ENCODE measurements at regions of chr5 and their contacts with region 1.

Region 1: DNA sequence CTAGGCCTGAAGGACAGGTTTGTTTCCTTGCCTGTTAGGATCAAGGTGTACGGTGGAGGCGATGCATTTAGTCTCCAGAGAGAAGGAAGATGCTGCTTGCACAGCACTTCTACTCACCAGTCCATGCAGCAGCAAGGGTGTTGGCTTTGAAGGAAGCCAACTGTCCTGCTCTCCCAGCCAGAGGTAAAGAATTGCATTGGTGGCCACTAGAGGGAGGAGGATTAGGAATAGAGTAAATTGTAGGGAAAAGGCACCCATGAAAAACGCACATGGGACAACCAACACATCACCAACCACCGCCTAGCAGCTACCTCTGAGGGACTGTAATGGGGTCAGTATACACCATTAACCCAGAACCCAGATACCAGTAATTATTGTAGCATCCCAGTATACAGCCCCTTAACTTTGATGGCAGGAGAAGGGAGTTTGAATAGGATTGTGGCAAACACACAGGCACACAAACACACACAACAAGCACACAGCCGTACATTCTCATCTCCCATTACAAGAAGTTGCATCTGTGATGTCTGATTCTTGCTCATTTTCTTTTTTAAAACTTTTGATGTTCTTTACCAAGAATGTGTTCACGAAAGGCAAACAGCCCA is 267.7 kb downstream of the ADAMTS6 start:
- DNase-seq: peak; percentile 50
- H3K4me3 Mint-ChIP-seq: no peak overlapping the region
- H3K27ac Mint-ChIP-seq: no peak overlapping the region
- H3K4me1 Mint-ChIP-seq: no peaks in the 10 kb centered on the region
- H3K27me3 Mint-ChIP-seq: no peaks in the 10 kb centered on the region
- CTCF ChIP-seq: peak; percentile 70

Region 2: GRCh38 chr5:64746446-64746845 is 467.6 kb before region 1 on chr5:
- CTCF ChIA-PET with region 1: no interaction called
- intact Hi-C with region 1: no loop called
- DNase-seq: no peak
- H3K4me3 Mint-ChIP-seq: no peak overlapping the region
- H3K27ac Mint-ChIP-seq: no peak overlapping the region
- H3K4me1 Mint-ChIP-seq: no peaks in the 10 kb centered on the region
- H3K27me3 Mint-ChIP-seq: no peaks in the 10 kb centered on the region
- CTCF ChIP-seq: no peak

Region 3: GRCh38 chr5:65086234-65086890 is 127.7 kb before region 1 on chr5:
- CTCF ChIA-PET with region 1: no interaction called
- intact Hi-C with region 1: no loop called
- DNase-seq: peak; percentile 36
- H3K4me3 Mint-ChIP-seq: no peak overlapping the region
- H3K27ac Mint-ChIP-seq: no peak overlapping the region
- H3K4me1 Mint-ChIP-seq: peaks cover 6% of the 10 kb centered on the region
- H3K27me3 Mint-ChIP-seq: no peaks in the 10 kb centered on the region
- CTCF ChIP-seq: no peak

Region 4: DNA sequence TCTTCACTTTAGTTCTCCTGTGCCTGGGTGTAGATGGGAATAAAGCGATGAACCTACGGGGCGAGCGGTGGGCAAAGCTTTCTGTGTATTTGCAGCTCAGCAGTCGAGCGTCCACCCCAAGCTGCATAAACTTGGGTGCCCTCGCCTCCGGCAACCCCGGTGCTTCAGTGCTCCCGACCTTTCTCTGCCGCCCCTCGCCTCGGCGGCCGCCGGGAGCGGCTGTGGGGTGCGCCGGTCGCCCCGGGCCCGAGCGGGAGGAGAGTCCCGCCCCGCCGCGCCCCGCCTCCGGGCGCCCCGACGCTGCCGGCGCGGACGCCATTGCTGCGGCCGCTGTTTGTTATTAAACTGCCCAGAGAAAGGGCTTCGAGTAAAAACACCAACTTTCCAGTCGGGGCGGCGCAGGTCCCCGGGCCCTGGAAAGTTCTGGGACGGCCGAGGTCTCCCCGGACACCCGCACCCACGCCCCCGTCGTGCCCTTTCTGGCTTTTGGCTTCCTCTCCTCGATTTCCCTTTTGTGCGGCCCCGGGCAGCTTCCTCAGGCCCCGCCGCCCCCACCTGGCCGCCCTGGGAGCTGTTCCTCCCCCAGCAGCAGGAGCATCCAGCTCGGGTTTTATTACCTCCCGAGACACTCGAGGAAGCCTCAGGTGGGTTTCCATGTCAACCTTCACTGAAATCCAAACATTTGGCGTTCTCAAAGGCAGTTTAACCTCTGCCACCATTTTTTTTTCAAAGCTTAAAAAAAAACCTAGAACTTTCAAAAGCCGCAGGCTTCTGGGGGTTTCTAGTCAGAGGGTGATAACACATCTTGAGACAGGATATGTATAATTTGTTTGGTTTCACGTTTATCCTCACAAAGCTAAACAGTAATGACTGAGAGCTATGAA is 111.0 kb before region 1 on chr5:
- CTCF ChIA-PET with region 1: no interaction called
- intact Hi-C with region 1: loop called (anchors 2 kb)
- DNase-seq: peak; percentile 71
- H3K4me3 Mint-ChIP-seq: peak overlapping the region; percentile 68
- H3K27ac Mint-ChIP-seq: peak overlapping the region; percentile 71
- H3K4me1 Mint-ChIP-seq: no peaks in the 10 kb centered on the region
- H3K27me3 Mint-ChIP-seq: no peaks in the 10 kb centered on the region
- CTCF ChIP-seq: peak; percentile 29

Region 5: DNA sequence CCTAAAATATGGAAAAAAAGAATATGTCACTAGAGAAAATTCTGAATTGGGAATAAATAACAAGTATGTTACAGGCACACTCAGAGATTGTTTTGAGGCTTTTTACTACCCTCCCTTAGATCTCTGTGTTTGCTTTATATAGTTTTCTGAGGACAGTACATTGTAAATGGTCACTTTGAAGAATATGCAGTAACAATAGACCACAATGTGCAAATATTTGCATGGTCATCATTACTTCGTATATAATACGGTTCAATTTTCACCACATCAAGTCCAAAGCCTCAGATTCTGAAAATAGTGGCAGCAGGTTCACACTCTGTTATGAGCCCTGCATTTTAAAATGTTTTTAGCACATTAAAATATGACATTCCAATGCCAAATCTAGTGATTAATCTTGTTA is 29.1 kb after region 1 on chr5:
- CTCF ChIA-PET with region 1: no interaction called
- intact Hi-C with region 1: no loop called
- DNase-seq: no peak
- H3K4me3 Mint-ChIP-seq: no peak overlapping the region
- H3K27ac Mint-ChIP-seq: no peak overlapping the region
- H3K4me1 Mint-ChIP-seq: no peaks in the 10 kb centered on the region
- H3K27me3 Mint-ChIP-seq: no peaks in the 10 kb centered on the region
- CTCF ChIP-seq: no peak